Gastrocnemius medialis (tissue), 4 donors: ENCODE measurements at regions of chr1 and their contacts with region 1.

Region 1: DNA sequence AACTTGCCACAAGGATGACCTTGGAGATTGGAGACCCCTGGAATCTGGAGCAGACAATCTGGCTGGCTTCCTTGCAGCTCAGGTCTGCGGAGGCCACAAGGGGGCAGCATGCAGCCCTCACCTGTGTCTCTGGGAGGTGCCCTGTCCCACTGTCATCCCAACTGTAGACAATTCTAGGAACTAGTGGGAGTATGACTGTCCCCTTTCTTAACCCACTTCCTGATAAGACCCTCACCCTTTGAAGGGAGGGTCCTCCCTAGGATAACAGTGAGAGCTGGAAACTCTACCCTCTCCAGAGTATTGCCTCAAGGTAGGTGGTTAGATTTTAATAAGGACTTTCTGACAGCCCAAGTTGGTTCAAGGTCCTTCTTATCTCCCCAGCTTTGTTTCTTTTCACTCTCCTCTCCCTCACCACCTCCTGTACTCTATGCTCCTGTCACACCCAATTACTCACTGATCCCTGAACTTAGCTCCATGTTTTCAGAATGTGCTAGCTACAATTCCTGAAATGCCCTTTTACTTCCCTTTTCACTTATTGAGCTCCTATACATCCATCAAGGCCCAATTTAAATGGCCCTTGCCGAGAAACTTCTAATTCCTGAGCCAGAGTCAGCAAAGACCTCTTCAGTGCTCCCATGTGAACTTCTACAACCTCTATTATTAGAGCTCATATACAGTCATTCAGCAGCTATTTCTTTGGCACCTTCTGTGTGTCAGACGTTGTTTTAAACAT is 9.2 kb upstream of the KCNQ4 start:
- DNase-seq: peak; percentile 26 to 55
- ATAC-seq: peak; percentile 55 to 68
- H3K4me3 ChIP-seq: no peak overlapping the region
- H3K27ac ChIP-seq: no peak overlapping the region
- H3K4me1 ChIP-seq: peaks cover 8 to 27% of the 10 kb centered on the region in 2 donors
- H3K27me3 ChIP-seq: no peaks in the 10 kb centered on the region
- CTCF ChIP-seq: peak; percentile 60 to 87 (median 81)
- POLR2A ChIP-seq: no peak

Region 2: DNA sequence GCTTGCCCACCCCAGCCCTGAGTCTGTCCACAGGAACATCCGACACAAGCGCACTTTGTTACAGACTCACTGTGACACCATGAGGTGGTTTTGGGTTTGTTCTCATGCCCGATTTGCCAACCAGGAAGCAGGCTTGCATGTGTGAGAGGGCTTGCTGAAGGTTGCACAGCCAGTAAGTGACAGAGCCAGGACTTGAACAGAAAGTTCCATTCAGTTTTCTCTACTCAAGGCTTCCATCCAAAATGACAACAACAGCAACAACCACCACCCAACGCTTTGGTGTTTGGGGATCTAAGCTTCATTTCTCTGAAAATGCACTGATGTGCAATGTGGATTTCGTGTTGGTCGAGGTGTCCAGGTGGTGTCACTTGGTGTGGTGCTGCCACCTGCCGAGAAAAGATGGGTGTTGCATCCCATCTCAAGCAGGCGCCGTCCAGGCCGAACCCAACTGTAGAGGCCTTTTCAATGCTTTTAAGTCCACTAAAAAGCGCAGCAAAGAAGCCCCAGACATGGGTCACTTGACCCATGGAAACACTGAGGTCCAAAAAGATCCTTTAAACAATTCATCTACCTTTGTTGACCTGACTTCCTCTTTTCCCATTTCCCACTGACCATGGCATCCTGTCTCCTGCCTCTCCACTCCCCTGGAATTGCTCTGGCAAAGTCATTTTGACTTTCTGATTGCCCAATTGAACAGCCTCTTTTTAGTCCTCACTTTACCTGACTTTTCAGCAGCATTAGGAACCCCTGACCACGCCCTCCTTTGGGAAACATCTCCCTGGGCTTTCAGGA is 75.6 kb after region 1 on chr1:
- in situ Hi-C with region 1: loop called (anchors 10 kb)
- intact Hi-C with region 1: loop called (anchors 1 kb)
- DNase-seq: peak; percentile 34 to 60
- ATAC-seq: peak; percentile 84
- H3K4me3 ChIP-seq: no peak overlapping the region
- H3K27ac ChIP-seq: no peak overlapping the region
- H3K4me1 ChIP-seq: no peaks in the 10 kb centered on the region
- H3K27me3 ChIP-seq: no peaks in the 10 kb centered on the region
- CTCF ChIP-seq: peak; percentile 89 to 94 (median 89)
- POLR2A ChIP-seq: no peak